ENCODE measurements at regions of chr12 and their contacts with region 1.

Region 1: DNA sequence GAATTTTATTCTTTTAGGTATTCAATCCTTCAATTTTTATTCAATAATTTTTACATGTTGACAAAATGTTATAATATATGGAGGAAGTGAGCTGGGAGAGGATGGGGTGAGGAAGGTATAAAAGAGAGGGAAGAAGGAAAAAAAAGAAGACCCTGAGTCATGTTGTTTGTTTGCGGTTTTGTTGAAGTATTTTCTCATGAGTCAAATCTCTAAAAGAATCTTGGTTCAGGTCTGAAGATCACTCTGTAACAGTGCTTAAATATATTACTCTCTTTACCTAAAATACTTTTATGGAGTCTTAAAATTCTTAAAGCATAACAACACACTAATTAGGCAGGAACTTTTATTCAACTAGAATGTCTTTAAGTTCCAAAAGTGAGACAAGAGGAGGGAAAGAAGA is 489.6 kb upstream of the GARIN6 start:
- DNase-seq: no peak
- H3K4me3 ChIP-seq: no peak overlapping the region
- H3K27ac ChIP-seq: no peak overlapping the region
- H3K4me1 ChIP-seq: no peaks in the 10 kb centered on the region
- H3K27me3 ChIP-seq: no peaks in the 10 kb centered on the region
- CTCF ChIP-seq: no peak

Region 2: GRCh38 chr12:99108924-99109323 is 49.0 kb before region 1 on chr12:
- CTCF ChIA-PET with region 1: no interaction called
- dilution Hi-C with region 1: loop called (anchors 5 kb)
- in situ Hi-C with region 1: no loop called
- intact Hi-C with region 1: no loop called
- DNase-seq: no peak
- H3K4me3 ChIP-seq: no peak overlapping the region
- H3K27ac ChIP-seq: no peak overlapping the region
- H3K4me1 ChIP-seq: no peaks in the 10 kb centered on the region
- H3K27me3 ChIP-seq: no peaks in the 10 kb centered on the region
- CTCF ChIP-seq: no peak

Region 3: DNA sequence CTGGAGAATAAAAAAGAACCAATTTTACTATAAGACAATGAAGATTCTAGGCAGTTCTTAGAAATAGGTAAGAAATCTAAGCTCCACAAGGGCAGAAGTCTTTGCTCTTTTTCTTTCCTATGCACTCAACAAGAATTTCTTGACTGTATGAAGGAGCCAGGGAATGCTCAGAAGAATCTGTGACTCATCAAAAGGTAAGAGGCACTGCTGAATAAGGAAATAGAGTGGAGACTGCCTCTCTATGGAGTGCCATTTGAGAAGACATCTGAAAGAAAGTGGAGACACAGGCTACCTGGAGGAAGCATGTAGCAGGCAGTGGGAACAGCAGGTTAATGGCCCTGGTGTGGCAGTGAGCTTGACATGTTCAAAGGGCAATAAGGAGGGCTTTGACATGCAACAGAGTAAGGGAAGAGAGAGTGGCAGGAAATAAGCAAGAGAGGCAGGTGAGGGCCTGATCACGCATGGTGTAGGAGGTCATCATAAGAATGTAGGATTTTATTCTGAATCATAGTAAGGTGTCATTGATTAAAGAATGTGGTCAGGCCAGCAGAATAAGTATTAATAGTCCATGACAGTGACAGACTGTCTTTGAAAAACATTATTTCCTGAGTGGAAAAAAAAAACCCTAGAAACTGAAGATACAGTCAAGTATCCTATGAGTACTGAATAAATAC is 42.9 kb after region 1 on chr12:
- CTCF ChIA-PET with region 1: no interaction called
- dilution Hi-C with region 1: no loop called
- in situ Hi-C with region 1: no loop called
- intact Hi-C with region 1: no loop called
- DNase-seq: peak; percentile 0
- H3K4me3 ChIP-seq: no peak overlapping the region
- H3K27ac ChIP-seq: no peak overlapping the region
- H3K4me1 ChIP-seq: no peaks in the 10 kb centered on the region
- H3K27me3 ChIP-seq: no peaks in the 10 kb centered on the region
- CTCF ChIP-seq: no peak

Region 4: GRCh38 chr12:99249543-99249942 is 91.6 kb after region 1 on chr12:
- CTCF ChIA-PET with region 1: no interaction called
- dilution Hi-C with region 1: loop called (anchors 5 kb)
- in situ Hi-C with region 1: no loop called
- intact Hi-C with region 1: no loop called
- DNase-seq: no peak
- H3K4me3 ChIP-seq: no peak overlapping the region
- H3K27ac ChIP-seq: no peak overlapping the region
- H3K4me1 ChIP-seq: no peaks in the 10 kb centered on the region
- H3K27me3 ChIP-seq: no peaks in the 10 kb centered on the region
- CTCF ChIP-seq: no peak

Region 5: DNA sequence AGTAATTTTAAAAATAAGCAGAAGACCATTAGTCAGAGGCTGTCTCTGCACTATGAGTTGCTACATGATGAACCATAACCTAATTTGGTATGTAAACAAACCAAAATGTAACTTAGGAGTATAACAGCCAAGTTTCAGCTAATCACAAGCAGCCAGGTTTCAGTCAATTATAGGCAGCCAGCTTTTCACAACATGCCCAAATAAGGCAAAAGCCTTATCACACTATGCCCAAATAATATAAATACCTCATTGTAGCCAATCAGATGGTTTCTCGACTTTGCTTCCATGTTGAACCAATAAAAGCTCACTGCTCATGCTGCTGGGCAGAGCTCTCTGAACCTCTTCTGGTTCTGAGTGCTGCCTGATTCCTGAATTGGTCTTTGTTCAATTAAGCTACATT is 528.2 kb after region 1 on chr12:
- CTCF ChIA-PET with region 1: no interaction called
- dilution Hi-C with region 1: no loop called
- in situ Hi-C with region 1: no loop called
- intact Hi-C with region 1: no loop called
- DNase-seq: no peak
- H3K4me3 ChIP-seq: no peak overlapping the region
- H3K27ac ChIP-seq: no peak overlapping the region
- H3K4me1 ChIP-seq: no peaks in the 10 kb centered on the region
- H3K27me3 ChIP-seq: no peaks in the 10 kb centered on the region
- CTCF ChIP-seq: no peak